Psoas muscle (tissue), 8 donors: ENCODE measurements at regions of chr17 and their contacts with region 1.

Region 1: GRCh38 chr17:32361270-32361669 is 11.3 kb downstream of the ZNF207 start:
- DNase-seq: no peak
- ATAC-seq: no peak
- H3K4me3 ChIP-seq: no peak overlapping the region
- H3K27ac ChIP-seq: no peak overlapping the region
- H3K4me1 ChIP-seq: peaks cover 7% of the 10 kb centered on the region
- H3K27me3 ChIP-seq: no peaks in the 10 kb centered on the region
- CTCF ChIP-seq: no peak

Region 2: DNA sequence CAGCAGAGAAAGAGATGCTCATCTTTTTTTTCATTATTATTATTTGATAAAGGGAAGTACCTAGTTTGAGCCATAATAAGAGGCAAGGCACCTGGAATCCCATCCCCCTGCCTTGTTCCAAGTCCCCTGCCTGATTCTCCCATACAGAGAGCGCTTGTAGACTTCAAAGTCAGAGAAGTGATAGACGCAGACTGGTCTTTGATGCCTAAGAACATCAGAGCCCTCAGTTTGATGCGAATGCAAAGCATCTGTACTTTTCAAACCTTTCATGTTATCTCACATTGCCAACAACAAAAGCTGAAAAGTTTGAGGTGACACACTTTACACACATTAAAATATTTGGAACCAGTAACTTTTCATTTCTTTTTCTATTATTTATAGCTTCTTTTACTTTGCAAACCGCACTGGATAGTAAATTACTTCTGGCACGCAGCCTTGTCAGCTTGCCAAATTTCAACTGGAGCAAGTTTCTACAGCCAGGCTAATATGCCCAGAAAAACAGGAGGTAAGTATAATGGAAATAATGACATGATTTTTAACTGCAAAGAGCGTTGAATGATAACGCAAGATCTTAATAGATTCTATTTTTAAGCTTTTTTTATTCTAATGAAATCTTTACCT is 453.8 kb before region 1 on chr17:
- intact Hi-C with region 1: no loop called
- DNase-seq: peak in 1 of 2 donors; percentile 24
- ATAC-seq: no peak
- H3K4me3 ChIP-seq: no peak overlapping the region
- H3K27ac ChIP-seq: no peak overlapping the region
- H3K4me1 ChIP-seq: no peaks in the 10 kb centered on the region
- H3K27me3 ChIP-seq: peaks cover 0 to 4% (median 0%) of the 10 kb centered on the region in 3 donors
- CTCF ChIP-seq: no peak

Region 3: GRCh38 chr17:32191306-32191705 is 170.0 kb before region 1 on chr17:
- intact Hi-C with region 1: loop called in 1 of 2 experiments (anchors 10 kb)
- DNase-seq: no peak
- ATAC-seq: no peak
- H3K4me3 ChIP-seq: no peak overlapping the region
- H3K27ac ChIP-seq: no peak overlapping the region
- H3K4me1 ChIP-seq: no peaks in the 10 kb centered on the region
- H3K27me3 ChIP-seq: no peaks in the 10 kb centered on the region
- CTCF ChIP-seq: no peak

Region 4: GRCh38 chr17:32265192-32265923 is 95.9 kb before region 1 on chr17 and contains the start of gene RHBDL3:
- intact Hi-C with region 1: no loop called
- DNase-seq: peak in 1 of 2 donors; percentile 53
- ATAC-seq: peak in 3 of 4 donors; percentile 41 to 64 (median 47)
- H3K4me3 ChIP-seq: peak within 1 kb of the TSS; percentile 74
- H3K27ac ChIP-seq: no peak within 1 kb of the TSS
- H3K4me1 ChIP-seq: peaks cover 8% of the 10 kb centered on the region
- H3K27me3 ChIP-seq: peaks cover 0 to 74% (median 28%) of the 10 kb centered on the region in 3 donors
- CTCF ChIP-seq: no peak
- total RNA-seq, gene RHBDL3: 0.04 to 0.19 (median 0.12) TPM

Region 5: GRCh38 chr17:32486111-32486700 is 124.9 kb after region 1 on chr17:
- intact Hi-C with region 1: no loop called
- DNase-seq: peak; percentile 81 to 87
- ATAC-seq: peak; percentile 82 to 84 (median 82)
- H3K4me3 ChIP-seq: peak overlapping the region; percentile 66
- H3K27ac ChIP-seq: peak overlapping the region; percentile 88
- H3K4me1 ChIP-seq: peaks cover 22% of the 10 kb centered on the region
- H3K27me3 ChIP-seq: no peaks in the 10 kb centered on the region
- CTCF ChIP-seq: no peak